Left lung (tissue), 14 donors: ENCODE measurements at regions of chr1 and their contacts with region 1.

Region 1: DNA sequence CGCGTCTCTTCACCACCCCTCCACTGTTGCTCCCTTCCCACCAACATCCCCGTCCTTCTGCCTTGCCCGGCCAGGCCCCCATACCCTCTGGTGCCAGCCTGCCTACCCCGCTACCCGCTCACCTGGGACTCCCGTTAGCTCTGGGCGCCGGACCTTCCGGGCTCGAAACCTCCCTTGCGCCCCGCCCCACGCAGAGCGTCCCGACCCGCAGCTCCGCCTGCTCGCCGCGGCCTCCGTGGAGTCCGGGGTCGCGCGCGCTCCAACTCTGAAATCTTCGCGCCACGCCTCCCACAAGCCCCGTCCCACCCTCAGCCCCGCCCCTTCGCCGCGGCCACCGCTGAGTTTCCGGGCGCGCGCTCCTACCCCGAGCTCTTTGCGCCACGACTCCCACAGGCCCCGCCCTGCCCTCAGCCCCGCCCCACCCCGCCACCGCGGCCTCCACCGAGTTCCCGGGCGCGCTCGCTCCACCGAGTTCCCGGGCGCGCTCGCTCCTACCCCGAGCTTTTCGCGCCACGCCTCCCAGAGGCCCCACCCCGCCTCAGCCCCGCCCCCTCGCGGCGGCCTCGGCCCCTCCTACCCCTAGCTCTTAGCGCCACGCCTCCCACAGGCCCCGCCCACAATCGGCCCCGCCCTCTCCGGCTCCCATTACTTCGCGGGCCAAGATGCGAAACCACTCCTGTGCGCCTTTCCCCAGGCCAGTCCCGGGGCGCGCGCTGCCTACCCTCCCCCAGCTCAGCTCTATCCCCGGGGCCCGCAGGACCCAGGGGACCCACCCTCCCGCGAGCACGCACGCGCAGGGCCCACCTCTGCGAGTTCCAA is at the start of gene IFT25:
- DNase-seq: peak; percentile 96 to 100 (median 98)
- ATAC-seq: peak; percentile 95
- H3K4me3 ChIP-seq: peak within 1 kb of the TSS; percentile 79 to 82
- H3K27ac ChIP-seq: peak within 1 kb of the TSS; percentile 87
- H3K4me1 ChIP-seq: peaks cover 7 to 32% of the 10 kb centered on the region in 2 donors
- H3K27me3 ChIP-seq: no peaks in the 10 kb centered on the region
- CTCF ChIP-seq: no peak
- polyA plus RNA-seq, gene IFT25: 50.4 to 65.4 (median 52.5) TPM

Region 2: DNA sequence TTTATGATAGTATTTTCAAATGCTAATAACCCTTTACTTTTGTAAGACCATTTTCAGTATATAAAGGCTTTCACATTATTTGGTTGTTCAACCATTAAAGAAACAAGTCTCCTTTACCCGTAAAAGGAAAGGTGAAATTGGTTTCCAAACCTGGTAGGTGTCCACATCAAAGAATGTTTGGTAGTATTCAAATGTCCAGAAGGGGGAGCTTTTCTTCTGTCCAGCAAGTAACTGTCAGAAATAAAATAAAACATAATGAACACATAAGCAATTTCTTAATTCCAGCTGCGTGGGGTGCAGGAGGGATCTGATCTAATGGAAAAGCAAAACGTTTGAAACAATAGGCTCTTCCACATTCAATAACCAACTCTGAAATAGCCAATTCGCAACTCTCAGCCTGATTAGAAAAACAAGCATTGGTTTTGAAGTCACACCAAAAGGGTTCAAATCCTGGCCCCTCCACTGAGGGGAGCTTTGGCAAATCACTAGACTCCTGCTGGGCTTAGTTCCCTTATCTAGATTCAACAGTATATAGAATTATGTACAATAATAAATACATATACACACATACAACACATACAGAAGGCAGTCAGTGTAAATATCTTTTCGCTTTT is 67.0 kb before region 1 on chr1:
- intact Hi-C with region 1: loop called in 1 of 2 experiments (anchors 5 kb)
- DNase-seq: peak in 2 of 4 donors; percentile 25 to 48
- ATAC-seq: peak; percentile 60
- H3K4me3 ChIP-seq: no peak overlapping the region
- H3K27ac ChIP-seq: no peak overlapping the region
- H3K4me1 ChIP-seq: no peaks in the 10 kb centered on the region
- H3K27me3 ChIP-seq: no peaks in the 10 kb centered on the region
- CTCF ChIP-seq: peak; percentile 45 to 54